A549 (cell line): ENCODE measurements at regions of chr1 and their contacts with region 1.

Region 1: DNA sequence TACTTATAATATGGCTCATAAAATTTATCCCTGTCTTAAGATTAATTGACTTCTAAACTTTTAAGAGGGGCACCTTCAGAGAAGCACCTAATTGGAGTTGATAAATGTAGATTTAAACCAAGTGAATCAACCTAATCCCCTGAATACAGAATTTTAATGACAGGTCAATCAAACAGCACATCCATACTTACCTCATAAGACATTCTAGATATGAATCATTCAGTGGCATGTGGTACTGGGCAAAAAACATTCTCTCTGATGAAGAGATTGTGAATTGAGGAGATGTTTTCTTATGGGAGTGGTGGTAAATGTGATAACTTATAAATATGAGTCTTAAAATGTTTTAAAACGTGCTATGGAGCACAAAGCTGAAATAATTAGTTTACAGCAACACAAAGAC is 167.5 kb upstream of the PTGFR start:
- DNase-seq: no peak
- ATAC-seq: no peak
- H3K4me3 ChIP-seq: no peak overlapping the region
- H3K27ac ChIP-seq: no peak overlapping the region
- H3K4me1 ChIP-seq: no peaks in the 10 kb centered on the region
- CTCF ChIP-seq: no peak
- EP300 ChIP-seq: no peak
- POLR2A ChIP-seq: no peak
- RAD21 ChIP-seq: no peak

Region 2: GRCh38 chr1:78333502-78333901 is 10.2 kb after region 1 on chr1:
- CTCF ChIA-PET with region 1: interaction called, 10 read pairs
- POLR2A ChIA-PET with region 1: no interaction called
- DNase-seq: peak in 1 of 2 experiments; percentile 33
- ATAC-seq: peak in 1 of 2 experiments; percentile 75; a peak in 3 of 6 replicates
- H3K4me3 ChIP-seq: no peak overlapping the region
- H3K27ac ChIP-seq: no peak overlapping the region
- H3K4me1 ChIP-seq: no peaks in the 10 kb centered on the region
- CTCF ChIP-seq: peak; percentile 34; the same call in 1 of the 3 replicates
- EP300 ChIP-seq: no peak
- POLR2A ChIP-seq: no peak
- RAD21 ChIP-seq: no peak